ENCODE measurements at regions of chr1 and their contacts with region 1.

Region 1: DNA sequence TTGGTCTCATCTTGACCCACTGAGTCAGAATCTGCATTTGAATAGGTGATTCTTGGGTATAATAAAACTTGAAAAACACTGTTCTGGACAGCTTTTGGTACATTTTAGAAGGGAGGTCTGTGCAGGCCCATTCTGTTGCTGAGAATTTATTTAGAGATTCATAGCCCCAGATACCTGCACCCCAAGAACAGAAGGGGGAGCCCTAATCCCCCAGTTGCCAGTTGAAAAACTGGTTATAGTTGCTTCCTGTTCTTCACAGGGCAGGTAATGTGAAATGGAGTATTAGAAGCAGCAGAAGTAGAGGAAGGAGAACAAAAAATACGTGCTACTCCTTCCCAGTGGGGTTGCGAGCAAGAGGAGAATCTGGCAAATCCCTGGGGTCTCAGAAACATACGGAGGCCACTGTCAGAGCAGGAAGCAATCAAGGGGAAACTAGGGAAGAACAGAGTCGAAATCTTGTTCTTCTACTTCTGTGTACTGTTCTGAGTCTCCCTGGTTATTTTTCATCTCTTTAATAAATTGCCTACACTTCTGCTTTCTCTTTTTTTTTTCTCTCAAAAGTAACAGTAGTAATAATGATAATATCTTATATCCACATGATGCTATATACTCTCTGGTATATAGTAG is 4.6 kb upstream of the CLCA2 start:
- DNase-seq: peak; percentile 47 to 62 (median 52)
- H3K4me3 ChIP-seq: no peak overlapping the region
- H3K4me3 Mint-ChIP-seq: peak overlapping the region; percentile 57 to 86 (median 72)
- H3K27ac ChIP-seq: no peak overlapping the region
- H3K27ac Mint-ChIP-seq: peak overlapping the region in 3 of 7 donors; percentile 53 to 83 (median 78)
- H3K4me1 ChIP-seq: no peaks in the 10 kb centered on the region
- H3K4me1 Mint-ChIP-seq: peaks cover 2 to 6% (median 4%) of the 10 kb centered on the region in 4 donors
- H3K27me3 ChIP-seq: no peaks in the 10 kb centered on the region
- H3K27me3 Mint-ChIP-seq: peaks cover 2 to 9% of the 10 kb centered on the region in 2 donors

Region 2: DNA sequence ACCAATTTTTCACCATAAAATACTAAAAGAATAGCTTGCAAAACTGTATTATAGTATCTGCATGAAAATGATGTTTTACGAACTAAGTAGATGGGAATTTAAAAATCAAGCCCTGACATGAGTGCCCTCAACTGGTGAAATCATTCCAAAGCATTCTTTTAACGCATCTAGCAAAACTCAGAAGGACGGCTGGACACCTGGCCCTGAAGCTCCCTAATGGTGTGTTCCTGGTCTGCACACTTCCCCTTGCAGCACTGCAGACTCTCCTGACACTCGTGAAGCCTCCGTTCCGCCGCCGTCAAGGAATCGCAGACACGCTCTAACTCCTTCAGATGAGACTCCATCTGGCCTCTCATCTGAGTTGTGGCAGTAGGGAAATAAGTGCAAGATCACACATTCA is 63.1 kb before region 1 on chr1:
- CTCF ChIA-PET with region 1: no interaction called
- POLR2A ChIA-PET with region 1: no interaction called
- intact Hi-C with region 1: no loop called
- DNase-seq: no peak
- H3K4me3 ChIP-seq: no peak overlapping the region
- H3K4me3 Mint-ChIP-seq: no peak overlapping the region
- H3K27ac ChIP-seq: no peak overlapping the region
- H3K27ac Mint-ChIP-seq: no peak overlapping the region
- H3K4me1 ChIP-seq: no peaks in the 10 kb centered on the region
- H3K4me1 Mint-ChIP-seq: no peaks in the 10 kb centered on the region
- H3K27me3 ChIP-seq: no peaks in the 10 kb centered on the region
- H3K27me3 Mint-ChIP-seq: no peaks in the 10 kb centered on the region

Region 3: GRCh38 chr1:86395771-86396497 is 23.5 kb before region 1 on chr1 and contains the start of gene ODF2L:
- CTCF ChIA-PET with region 1: interaction called, 3 read pairs
- POLR2A ChIA-PET with region 1: interaction called, 5 read pairs
- intact Hi-C with region 1: loop called (anchors 1 kb)
- DNase-seq: peak; percentile 90 to 94 (median 92)
- H3K4me3 ChIP-seq: peak within 1 kb of the TSS; percentile 77 to 87
- H3K4me3 Mint-ChIP-seq: peak within 1 kb of the TSS; percentile 94 to 99 (median 98)
- H3K27ac ChIP-seq: peak within 1 kb of the TSS; percentile 92
- H3K27ac Mint-ChIP-seq: peak within 1 kb of the TSS; percentile 97 to 100 (median 99)
- H3K4me1 ChIP-seq: peaks cover 56% of the 10 kb centered on the region
- H3K4me1 Mint-ChIP-seq: peaks cover 43 to 68% (median 51%) of the 10 kb centered on the region in 4 donors
- H3K27me3 ChIP-seq: no peaks in the 10 kb centered on the region
- H3K27me3 Mint-ChIP-seq: no peaks in the 10 kb centered on the region
- total RNA-seq, gene ODF2L: 97.3 to 98.3 TPM

Region 4: GRCh38 chr1:86429835-86430234 is 10.4 kb after region 1 on chr1:
- CTCF ChIA-PET with region 1: interaction called, 10 read pairs
- POLR2A ChIA-PET with region 1: interaction called, 3 read pairs
- intact Hi-C with region 1: no loop called
- DNase-seq: no peak
- H3K4me3 ChIP-seq: no peak overlapping the region
- H3K4me3 Mint-ChIP-seq: no peak overlapping the region
- H3K27ac ChIP-seq: no peak overlapping the region
- H3K27ac Mint-ChIP-seq: no peak overlapping the region
- H3K4me1 ChIP-seq: peaks cover 6% of the 10 kb centered on the region
- H3K4me1 Mint-ChIP-seq: no peaks in the 10 kb centered on the region
- H3K27me3 ChIP-seq: no peaks in the 10 kb centered on the region
- H3K27me3 Mint-ChIP-seq: peaks cover 2 to 3% of the 10 kb centered on the region in 2 donors

Measured in CD4-positive, alpha-beta memory T cell (primary cell).